Ascending aorta (tissue), 2 donors: ENCODE measurements at regions of chr1 and their contacts with region 1.

Region 1: GRCh38 chr1:67760030-67760821 is 73.0 kb downstream of the GNG12 start:
- DNase-seq: peak in 1 of 2 donors; percentile 84
- H3K4me3 ChIP-seq: no peak overlapping the region
- H3K27ac ChIP-seq: peak overlapping the region; percentile 78 to 82
- H3K4me1 ChIP-seq: peaks cover 6 to 38% of the 10 kb centered on the region in 2 donors
- H3K27me3 ChIP-seq: no peaks in the 10 kb centered on the region
- CTCF ChIP-seq: peak; percentile 73 to 83 (median 81)

Region 2: GRCh38 chr1:67561704-67562113 is 198.5 kb before region 1 on chr1:
- intact Hi-C with region 1: loop called (anchors 1 kb)
- DNase-seq: peak; percentile 66 to 96
- H3K4me3 ChIP-seq: no peak overlapping the region
- H3K27ac ChIP-seq: peak overlapping the region in 1 of 2 donors; percentile 30
- H3K4me1 ChIP-seq: peaks cover 2 to 12% of the 10 kb centered on the region in 2 donors
- H3K27me3 ChIP-seq: no peaks in the 10 kb centered on the region
- CTCF ChIP-seq: peak; percentile 85 to 92 (median 91)

Region 3: GRCh38 chr1:67908250-67908936 is 148.2 kb after region 1 on chr1:
- intact Hi-C with region 1: no loop called
- DNase-seq: no peak
- H3K4me3 ChIP-seq: no peak overlapping the region
- H3K27ac ChIP-seq: no peak overlapping the region
- H3K4me1 ChIP-seq: no peaks in the 10 kb centered on the region
- H3K27me3 ChIP-seq: no peaks in the 10 kb centered on the region
- CTCF ChIP-seq: no peak

Region 4: GRCh38 chr1:67945733-67946374 is 185.6 kb after region 1 on chr1:
- intact Hi-C with region 1: no loop called
- DNase-seq: no peak
- H3K4me3 ChIP-seq: no peak overlapping the region
- H3K27ac ChIP-seq: peak overlapping the region in 1 of 2 donors; percentile 23
- H3K4me1 ChIP-seq: no peaks in the 10 kb centered on the region
- H3K27me3 ChIP-seq: no peaks in the 10 kb centered on the region
- CTCF ChIP-seq: no peak

Region 5: DNA sequence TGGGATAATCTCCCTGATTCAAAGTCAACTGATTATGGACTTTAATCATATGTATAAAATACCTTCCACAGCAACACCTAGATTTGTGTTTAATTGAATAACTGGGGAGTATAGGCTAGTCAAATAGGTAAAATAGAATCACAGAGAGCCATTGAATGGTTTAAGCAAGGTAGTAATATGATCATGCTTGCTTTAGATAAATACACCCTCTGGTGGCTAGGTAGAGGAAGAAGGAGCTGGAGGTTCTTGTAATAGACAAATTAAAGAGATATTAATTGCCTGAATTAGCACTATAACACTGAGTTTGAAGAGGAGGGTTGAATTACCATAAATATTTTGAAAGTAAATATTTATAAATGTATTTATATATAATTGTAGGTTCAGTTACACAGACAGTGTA is 249.9 kb after region 1 on chr1:
- intact Hi-C with region 1: loop called (anchors 10 kb)
- DNase-seq: no peak
- H3K4me3 ChIP-seq: no peak overlapping the region
- H3K27ac ChIP-seq: no peak overlapping the region
- H3K4me1 ChIP-seq: no peaks in the 10 kb centered on the region
- H3K27me3 ChIP-seq: no peaks in the 10 kb centered on the region
- CTCF ChIP-seq: peak in 1 of 3 experiments; percentile 34